Psoas muscle (tissue), 8 donors: ENCODE measurements at regions of chr5 and their contacts with region 1.

Region 1: GRCh38 chr5:158074992-158075769 is 216.2 kb upstream of the CLINT1 start:
- DNase-seq: peak; percentile 44 to 66
- ATAC-seq: peak; percentile 23 to 73 (median 68)
- H3K4me3 ChIP-seq: peak overlapping the region; percentile 30
- H3K27ac ChIP-seq: no peak overlapping the region
- H3K4me1 ChIP-seq: no peaks in the 10 kb centered on the region
- H3K27me3 ChIP-seq: no peaks in the 10 kb centered on the region
- CTCF ChIP-seq: peak; percentile 60

Region 2: GRCh38 chr5:158145827-158146226 is 70.6 kb after region 1 on chr5:
- intact Hi-C with region 1: loop called in 1 of 2 experiments (anchors 5 kb)
- DNase-seq: no peak
- ATAC-seq: no peak
- H3K4me3 ChIP-seq: no peak overlapping the region
- H3K27ac ChIP-seq: no peak overlapping the region
- H3K4me1 ChIP-seq: no peaks in the 10 kb centered on the region
- H3K27me3 ChIP-seq: no peaks in the 10 kb centered on the region
- CTCF ChIP-seq: no peak

Region 3: DNA sequence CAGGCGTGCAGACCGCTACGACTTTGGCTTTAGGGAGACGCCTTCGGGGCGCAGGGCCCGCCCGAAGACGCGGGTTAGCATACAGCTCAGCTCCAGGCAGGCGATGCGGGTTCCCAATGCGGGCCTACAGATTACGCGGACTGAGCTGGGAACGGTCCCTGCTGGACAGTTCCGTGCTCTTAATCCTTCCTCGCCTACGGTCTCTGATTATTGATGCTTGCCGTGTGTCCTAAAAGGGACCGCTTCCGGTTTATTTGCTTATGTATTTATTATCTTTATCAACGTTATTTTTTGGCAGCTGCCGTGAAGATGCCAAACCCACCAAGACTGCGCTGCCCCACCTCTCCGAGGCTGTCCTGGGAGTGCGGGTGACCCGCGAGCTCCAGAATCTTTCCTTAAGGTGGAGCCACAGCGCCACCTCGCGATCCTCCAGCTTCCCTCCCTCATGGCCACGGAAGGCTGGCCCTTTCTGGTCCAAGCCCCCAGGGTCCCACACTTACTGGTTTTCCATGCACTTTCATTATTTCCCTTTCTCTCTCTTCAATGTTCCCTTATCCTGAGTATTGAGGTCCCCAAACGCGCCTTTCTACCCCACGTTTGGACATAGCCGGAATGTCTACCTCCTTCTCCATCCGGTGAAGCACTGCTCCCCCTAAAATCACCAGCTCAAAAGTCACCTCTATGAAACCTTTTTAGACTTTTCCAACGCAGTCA is 1031.5 kb after region 1 on chr5:
- intact Hi-C with region 1: loop called (anchors 10 kb)
- DNase-seq: peak; percentile 84 to 87
- ATAC-seq: peak; percentile 69 to 90 (median 85)
- H3K4me3 ChIP-seq: peak overlapping the region; percentile 47
- H3K27ac ChIP-seq: no peak overlapping the region
- H3K4me1 ChIP-seq: no peaks in the 10 kb centered on the region
- H3K27me3 ChIP-seq: peaks cover 8 to 82% (median 9%) of the 10 kb centered on the region in 3 donors
- CTCF ChIP-seq: peak; percentile 90

Region 4: DNA sequence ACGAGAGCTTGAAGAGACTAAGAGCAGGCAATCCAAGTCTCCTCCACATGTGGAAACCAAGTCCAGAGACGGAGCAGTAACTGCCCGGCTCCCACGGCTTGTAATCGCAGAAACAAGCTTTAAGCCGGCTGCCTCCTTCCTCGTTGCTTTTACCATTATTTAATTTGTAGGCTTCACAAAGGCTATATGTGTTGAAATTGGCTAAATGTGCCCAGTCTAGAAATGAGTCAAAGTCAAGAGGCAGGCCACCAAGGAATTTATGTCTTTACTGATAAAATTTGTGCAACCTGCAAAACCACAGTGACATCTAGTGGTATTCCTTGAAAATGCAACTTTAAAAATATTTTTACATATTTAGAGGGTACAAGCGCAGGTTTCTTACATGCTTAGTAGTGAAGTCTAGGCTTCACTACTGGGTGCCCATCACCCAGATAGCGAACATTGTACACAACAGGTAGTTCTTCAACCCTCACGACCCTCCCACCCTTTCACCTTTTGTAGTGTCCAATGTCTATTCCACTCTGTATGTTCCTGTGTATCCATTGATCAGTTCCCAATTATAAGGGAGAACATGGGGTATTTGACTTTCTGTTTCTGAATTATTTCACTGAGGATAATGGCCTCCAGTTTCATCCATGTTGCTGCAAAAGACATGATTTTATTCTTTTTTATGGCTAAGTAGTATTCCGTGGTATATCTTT is 1058.0 kb after region 1 on chr5:
- intact Hi-C with region 1: loop called in 1 of 2 experiments (anchors 10 kb)
- DNase-seq: no peak
- ATAC-seq: peak in 3 of 4 donors; percentile 42 to 52 (median 46)
- H3K4me3 ChIP-seq: no peak overlapping the region
- H3K27ac ChIP-seq: no peak overlapping the region
- H3K4me1 ChIP-seq: no peaks in the 10 kb centered on the region
- H3K27me3 ChIP-seq: peaks cover 0 to 2% (median 0%) of the 10 kb centered on the region in 3 donors
- CTCF ChIP-seq: peak; percentile 81